GM12878 (cell line): ENCODE measurements at regions of chr9 and their contacts with region 1.

Region 1: GRCh38 chr9:9412241-9412640 is 1200.6 kb downstream of the PTPRD start:
- DNase-seq: no peak
- ATAC-seq: no peak
- H3K4me3 ChIP-seq: no peak overlapping the region
- H3K27ac ChIP-seq: no peak overlapping the region
- H3K4me1 ChIP-seq: no peaks in the 10 kb centered on the region
- H3K27me3 ChIP-seq: no peaks in the 10 kb centered on the region
- CTCF ChIP-seq: no peak
- EP300 ChIP-seq: no peak
- POLR2A ChIP-seq: no peak
- RAD21 ChIP-seq: no peak

Region 2: DNA sequence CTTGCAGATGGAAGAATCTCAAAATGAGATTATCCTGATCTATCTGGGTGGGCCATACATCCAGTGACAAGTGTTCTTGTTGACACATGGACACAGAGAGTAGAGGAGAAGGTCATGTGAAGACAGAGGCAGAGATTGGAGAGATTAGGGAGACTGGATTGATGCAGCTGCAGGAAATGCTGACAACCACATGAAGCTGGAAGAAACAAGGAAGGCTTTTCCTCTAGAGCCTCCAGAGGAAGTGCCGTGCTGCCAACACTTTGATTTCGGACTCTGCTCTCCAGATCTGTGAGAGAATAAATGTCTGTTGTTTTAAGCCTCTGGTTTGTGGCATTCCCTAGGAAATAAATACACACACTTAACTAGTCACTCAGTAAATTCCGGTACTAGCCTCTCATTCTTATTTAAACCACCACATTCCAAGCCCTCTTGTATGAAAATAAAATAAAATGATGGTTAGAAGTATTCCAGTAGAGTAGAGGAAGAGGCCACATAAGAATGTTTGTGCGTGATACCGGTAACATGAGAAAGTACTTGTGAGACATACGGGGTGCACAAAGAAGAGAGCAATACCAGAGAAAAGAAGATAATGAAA is 1501.7 kb before region 1 on chr9:
- CTCF ChIA-PET with region 1: no interaction called
- POLR2A ChIA-PET with region 1: no interaction called
- RAD21 ChIA-PET with region 1: no interaction called
- SMC1A ChIA-PET with region 1: no interaction called
- in situ Hi-C with region 1: no loop called
- intact Hi-C with region 1: loop called (anchors 5 kb)
- DNase-seq: no peak
- ATAC-seq: no peak
- H3K4me3 ChIP-seq: no peak overlapping the region
- H3K27ac ChIP-seq: no peak overlapping the region
- H3K4me1 ChIP-seq: no peaks in the 10 kb centered on the region
- H3K27me3 ChIP-seq: no peaks in the 10 kb centered on the region
- CTCF ChIP-seq: no peak
- EP300 ChIP-seq: no peak
- POLR2A ChIP-seq: no peak
- RAD21 ChIP-seq: no peak

Region 3: DNA sequence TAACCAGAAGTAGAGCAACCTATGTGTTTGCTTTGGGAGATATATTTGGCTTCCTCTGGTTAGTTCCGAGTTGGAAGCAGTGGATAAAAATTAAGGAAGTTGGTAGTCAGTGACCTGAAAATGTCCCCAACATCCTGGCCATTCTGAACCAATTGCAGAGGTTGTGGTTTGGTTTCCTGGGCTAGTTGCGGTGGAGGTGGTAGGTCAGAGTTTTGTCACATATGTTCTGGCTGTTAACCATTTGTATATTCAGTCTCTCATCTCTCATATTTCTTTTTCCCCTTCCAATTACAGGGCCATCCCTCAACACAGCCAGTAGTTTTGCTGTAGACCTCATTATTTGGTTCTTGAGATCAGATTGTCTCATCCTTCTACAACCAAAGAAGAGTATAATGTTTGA is 173.7 kb after region 1 on chr9:
- CTCF ChIA-PET with region 1: no interaction called
- POLR2A ChIA-PET with region 1: no interaction called
- RAD21 ChIA-PET with region 1: no interaction called
- SMC1A ChIA-PET with region 1: no interaction called
- in situ Hi-C with region 1: no loop called
- intact Hi-C with region 1: no loop called
- DNase-seq: no peak
- ATAC-seq: no peak
- H3K4me3 ChIP-seq: no peak overlapping the region
- H3K27ac ChIP-seq: no peak overlapping the region
- H3K4me1 ChIP-seq: no peaks in the 10 kb centered on the region
- H3K27me3 ChIP-seq: no peaks in the 10 kb centered on the region
- CTCF ChIP-seq: no peak
- EP300 ChIP-seq: no peak
- POLR2A ChIP-seq: no peak
- RAD21 ChIP-seq: no peak